PC-9 (cell line): ENCODE measurements at regions of chr3 and their contacts with region 1.

Region 1: GRCh38 chr3:24704496-24704895 is 209.8 kb upstream of the THRB start:
- DNase-seq: peak; percentile 7 to 88
- H3K4me3 ChIP-seq: no peak overlapping the region
- H3K27ac ChIP-seq: 0 out of 2 replicates have a peak overlapping the region, but pooled peaks have one; percentile 2
- H3K4me1 ChIP-seq: peaks cover 5% of the 10 kb centered on the region
- H3K27me3 ChIP-seq: no peaks in the 10 kb centered on the region
- CTCF ChIP-seq: no peak

Region 2: GRCh38 chr3:24725589-24726255 is 21.2 kb after region 1 on chr3:
- CTCF ChIA-PET with region 1: no interaction called
- POLR2A ChIA-PET with region 1: no interaction called
- intact Hi-C with region 1: loop called (anchors 2 kb)
- DNase-seq: peak; percentile 10 to 72
- H3K4me3 ChIP-seq: no peak overlapping the region
- H3K27ac ChIP-seq: peak overlapping the region; percentile 59
- H3K4me1 ChIP-seq: peaks cover 16% of the 10 kb centered on the region
- H3K27me3 ChIP-seq: no peaks in the 10 kb centered on the region
- CTCF ChIP-seq: no peak